HepG2 (cell line): ENCODE measurements at regions of chr2 and their contacts with region 1.

Region 1: DNA sequence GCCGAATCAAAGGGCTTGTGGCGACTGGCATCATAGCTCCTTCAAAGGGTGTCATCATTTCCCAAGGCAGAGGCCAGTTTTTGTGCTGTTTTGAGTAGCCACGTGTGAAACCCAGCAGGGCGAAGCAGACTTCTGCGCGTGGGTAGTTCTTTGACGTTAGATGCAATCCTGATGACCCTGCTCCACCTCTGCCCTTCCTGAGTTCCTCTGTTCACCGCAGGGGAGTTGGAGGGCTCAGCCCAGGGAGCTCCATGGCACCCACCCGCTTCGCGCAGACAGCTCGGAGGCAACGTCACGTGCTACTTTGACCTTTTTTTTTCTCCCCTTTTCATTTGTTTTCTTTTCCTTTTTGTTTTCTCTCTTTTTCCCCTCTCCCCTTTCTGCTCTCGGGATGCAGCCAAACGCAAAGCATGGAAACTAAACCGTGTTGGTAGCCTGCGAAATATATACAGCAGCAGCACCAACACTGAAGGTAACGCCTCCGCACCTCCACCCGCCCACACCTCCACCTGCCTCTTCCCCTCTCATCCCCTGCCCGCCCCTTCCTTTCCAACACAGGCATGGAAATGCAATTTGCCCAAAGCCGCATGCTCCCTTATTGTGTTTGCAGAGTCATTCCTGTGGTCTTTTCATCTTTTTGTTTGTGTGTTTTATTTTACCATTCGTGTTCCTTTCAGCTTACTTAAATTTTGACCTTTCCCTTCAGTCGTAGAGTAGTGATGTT is 153.6 kb downstream of the GBX2 start:
- DNase-seq: no peak
- ATAC-seq: no peak
- H3K4me3 ChIP-seq: no peak overlapping the region
- H3K27ac ChIP-seq: no peak overlapping the region
- H3K4me1 ChIP-seq: peaks cover 31% of the 10 kb centered on the region
- H3K27me3 ChIP-seq: no peaks in the 10 kb centered on the region
- CTCF ChIP-seq: no peak
- EP300 ChIP-seq: no peak
- POLR2A ChIP-seq: no peak
- RAD21 ChIP-seq: no peak

Region 2: GRCh38 chr2:236117861-236118300 is 103.3 kb after region 1 on chr2:
- CTCF ChIA-PET with region 1: no interaction called
- POLR2A ChIA-PET with region 1: no interaction called
- in situ Hi-C with region 1: no loop called
- intact Hi-C with region 1: loop called (anchors 10 kb)
- DNase-seq: peak; percentile 93
- ATAC-seq: peak; percentile 89
- H3K4me3 ChIP-seq: no peak overlapping the region
- H3K27ac ChIP-seq: no peak overlapping the region
- H3K4me1 ChIP-seq: peaks cover 30% of the 10 kb centered on the region
- H3K27me3 ChIP-seq: no peaks in the 10 kb centered on the region; a peak in 1 of 5 replicates
- CTCF ChIP-seq: no peak
- EP300 ChIP-seq: peak in 1 of 2 experiments; percentile 94; a peak in 2 of 4 replicates
- POLR2A ChIP-seq: no peak
- RAD21 ChIP-seq: no peak